GM18951 (cell line): ENCODE measurements at regions of chr6 and their contacts with region 1.

Region 1: GRCh38 chr6:31546962-31547726 is at the start of gene NFKBIL1:
- POLR2A ChIP-seq: peak; percentile 59

Region 2: DNA sequence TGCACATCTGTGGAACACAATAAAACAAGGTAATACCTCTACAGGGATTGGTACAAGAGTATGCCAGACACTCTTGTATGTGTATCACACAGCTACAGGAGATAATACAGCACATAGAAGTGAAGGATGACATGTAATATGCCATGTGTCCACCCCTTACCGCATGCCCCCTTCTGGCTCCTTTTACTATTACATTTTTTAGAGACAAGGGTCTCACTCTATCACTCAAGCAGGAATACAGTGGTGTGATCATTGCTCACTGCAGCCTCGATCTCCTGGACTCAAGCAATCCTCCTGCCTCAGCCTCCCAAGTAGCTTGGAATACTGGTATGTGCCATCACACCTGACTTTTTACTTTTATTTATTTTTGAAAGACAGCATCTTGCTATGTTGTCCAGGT is 49.9 kb after region 1 on chr6:
- in situ Hi-C with region 1: loop called (anchors 5 kb)
- POLR2A ChIP-seq: no peak